ENCODE measurements at regions of chr3 and their contacts with region 1.

Region 1: DNA sequence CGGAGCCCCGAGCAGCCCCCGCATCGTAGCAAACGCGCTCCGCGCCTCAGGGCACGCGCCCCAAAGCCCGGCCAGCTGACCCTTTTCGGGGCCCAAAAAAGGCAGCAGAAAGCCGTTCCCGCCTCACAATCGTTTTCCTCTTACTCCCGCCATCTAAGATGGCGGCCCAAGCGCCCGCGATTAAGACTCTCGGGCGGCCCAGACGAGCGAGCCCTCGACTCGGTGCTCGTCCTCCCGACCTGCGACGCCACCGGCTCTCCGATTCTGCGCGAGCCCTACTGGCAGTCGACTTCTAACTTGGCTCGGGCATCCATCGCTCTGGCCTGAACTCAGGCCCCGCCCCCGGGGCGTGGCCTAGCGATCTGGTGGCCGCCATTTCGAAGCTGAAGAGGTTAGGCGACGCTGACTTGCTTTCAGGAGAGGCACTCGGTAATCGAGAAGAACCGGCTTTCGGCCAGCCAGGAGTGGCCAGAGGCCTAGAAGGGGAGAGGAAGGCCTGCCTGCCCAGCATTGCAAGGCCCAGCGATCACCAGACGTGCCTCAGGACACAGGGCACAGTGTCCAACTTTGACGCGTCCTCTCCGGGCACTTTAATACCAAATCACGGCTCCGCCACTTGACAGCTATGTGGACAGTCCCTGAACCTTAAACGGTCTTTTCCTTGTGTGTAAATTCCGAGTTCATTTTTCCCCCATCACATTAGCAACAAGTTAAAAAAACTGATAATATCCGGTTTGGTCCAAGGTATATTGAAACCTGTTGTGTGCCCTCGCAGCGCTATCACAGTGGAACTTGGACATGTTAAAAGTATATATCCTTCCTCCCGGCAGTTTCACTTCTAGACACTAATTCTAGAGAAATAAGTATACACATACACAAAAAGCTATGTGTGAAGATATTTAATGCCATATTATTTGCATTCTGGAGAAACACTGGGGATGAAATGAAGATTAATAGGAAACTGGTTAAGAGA is at the start of gene RAF1:
- DNase-seq: peak; percentile 94
- ATAC-seq: peak; percentile 91
- H3K4me3 ChIP-seq: peak within 1 kb of the TSS; percentile 91 to 98 (median 92)
- H3K27ac ChIP-seq: peak within 1 kb of the TSS; percentile 93
- H3K4me1 ChIP-seq: peaks cover 28% of the 10 kb centered on the region
- H3K27me3 ChIP-seq: no peaks in the 10 kb centered on the region; a peak in 1 of 5 replicates
- CTCF ChIP-seq: 0 out of 2 replicates have a peak, but pooled peaks have one; percentile 6
- EP300 ChIP-seq: peak in 1 of 2 experiments; percentile 42; a peak in 1 of 4 replicates
- POLR2A ChIP-seq: peak; percentile 93 to 94
- RAD21 ChIP-seq: 0 out of 2 replicates have a peak, but pooled peaks have one; percentile 9
- total RNA-seq, gene RAF1: 59.0 and 72.2 TPM in 2 replicates

Region 2: DNA sequence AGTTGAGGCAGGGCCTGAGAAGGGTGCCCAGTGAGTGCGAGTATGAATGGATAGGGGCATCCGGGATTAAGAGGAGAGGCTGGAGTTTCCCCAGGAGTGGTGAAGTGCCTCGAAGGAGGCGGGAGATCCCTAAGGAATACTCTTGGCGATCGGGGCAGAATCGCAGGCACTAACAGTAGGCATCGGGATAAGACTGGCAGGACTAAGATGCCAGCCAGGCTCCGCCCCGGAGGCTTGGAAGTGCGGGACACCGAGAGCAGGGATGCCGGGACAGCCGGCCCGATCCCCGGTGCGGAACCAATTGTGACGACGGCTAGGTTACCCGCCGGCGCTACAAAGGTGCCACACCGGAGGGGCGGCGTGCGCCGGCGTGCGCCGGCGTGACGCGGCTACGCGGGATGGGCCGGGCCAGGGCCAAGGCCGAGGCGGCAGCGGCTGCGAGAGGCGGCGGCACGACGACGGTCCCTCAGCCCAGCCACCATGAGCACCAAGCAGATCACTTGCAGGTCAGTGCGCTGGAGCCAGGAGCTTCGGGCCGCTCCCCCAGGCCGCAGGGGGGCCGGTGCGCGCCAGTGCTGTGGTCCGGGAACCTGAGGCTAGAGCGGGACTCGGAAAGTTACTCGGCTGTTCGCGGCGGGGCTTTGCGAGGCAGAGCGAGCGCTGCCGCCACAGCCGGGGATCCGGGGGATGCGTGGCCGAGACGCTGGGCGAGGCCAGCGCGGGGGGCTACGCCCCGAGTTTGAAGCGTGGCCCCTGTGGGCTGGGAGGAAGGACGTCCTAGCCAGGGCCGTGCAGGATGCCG is 107.3 kb before region 1 on chr3 and contains the start of gene MKRN2:
- CTCF ChIA-PET with region 1: no interaction called
- POLR2A ChIA-PET with region 1: interaction called, 3 read pairs
- in situ Hi-C with region 1: no loop called
- intact Hi-C with region 1: loop called (anchors 5 kb)
- DNase-seq: peak; percentile 64
- ATAC-seq: peak; percentile 97
- H3K4me3 ChIP-seq: peak within 1 kb of the TSS; percentile 91 to 97 (median 91)
- H3K27ac ChIP-seq: peak within 1 kb of the TSS; percentile 94
- H3K4me1 ChIP-seq: peaks cover 42% of the 10 kb centered on the region
- H3K27me3 ChIP-seq: no peaks in the 10 kb centered on the region; a peak in 1 of 5 replicates
- CTCF ChIP-seq: 0 out of 2 replicates have a peak, but pooled peaks have one; percentile 7
- EP300 ChIP-seq: peak in 1 of 2 experiments; percentile 56; a peak in 2 of 4 replicates
- POLR2A ChIP-seq: peak; percentile 94 to 96
- RAD21 ChIP-seq: peak; percentile 47
- total RNA-seq, gene MKRN2: 25.5 and 32.8 TPM in 2 replicates

Region 3: GRCh38 chr3:12648384-12648959 is 15.8 kb before region 1 on chr3:
- CTCF ChIA-PET with region 1: no interaction called
- POLR2A ChIA-PET with region 1: interaction called, 43 read pairs
- in situ Hi-C with region 1: no loop called
- intact Hi-C with region 1: no loop called
- DNase-seq: no peak
- ATAC-seq: no peak
- H3K4me3 ChIP-seq: peak overlapping the region in 2 of 3 experiments; percentile 22 to 28; a peak in 2 of 6 replicates
- H3K27ac ChIP-seq: peak overlapping the region; percentile 90
- H3K4me1 ChIP-seq: peaks cover 89% of the 10 kb centered on the region
- H3K27me3 ChIP-seq: no peaks in the 10 kb centered on the region
- CTCF ChIP-seq: no peak
- EP300 ChIP-seq: no peak
- POLR2A ChIP-seq: no peak
- RAD21 ChIP-seq: no peak

Region 4: GRCh38 chr3:12679468-12679867 is 15.2 kb after region 1 on chr3:
- CTCF ChIA-PET with region 1: no interaction called
- POLR2A ChIA-PET with region 1: interaction called, 21 read pairs
- in situ Hi-C with region 1: no loop called
- intact Hi-C with region 1: no loop called
- DNase-seq: peak; percentile 38
- ATAC-seq: peak; percentile 51
- H3K4me3 ChIP-seq: no peak overlapping the region
- H3K27ac ChIP-seq: no peak overlapping the region
- H3K4me1 ChIP-seq: peaks cover 47% of the 10 kb centered on the region
- H3K27me3 ChIP-seq: no peaks in the 10 kb centered on the region
- CTCF ChIP-seq: no peak
- EP300 ChIP-seq: no peak
- POLR2A ChIP-seq: no peak
- RAD21 ChIP-seq: no peak